ENCODE measurements at regions of chr12 and their contacts with region 1.

Region 1: DNA sequence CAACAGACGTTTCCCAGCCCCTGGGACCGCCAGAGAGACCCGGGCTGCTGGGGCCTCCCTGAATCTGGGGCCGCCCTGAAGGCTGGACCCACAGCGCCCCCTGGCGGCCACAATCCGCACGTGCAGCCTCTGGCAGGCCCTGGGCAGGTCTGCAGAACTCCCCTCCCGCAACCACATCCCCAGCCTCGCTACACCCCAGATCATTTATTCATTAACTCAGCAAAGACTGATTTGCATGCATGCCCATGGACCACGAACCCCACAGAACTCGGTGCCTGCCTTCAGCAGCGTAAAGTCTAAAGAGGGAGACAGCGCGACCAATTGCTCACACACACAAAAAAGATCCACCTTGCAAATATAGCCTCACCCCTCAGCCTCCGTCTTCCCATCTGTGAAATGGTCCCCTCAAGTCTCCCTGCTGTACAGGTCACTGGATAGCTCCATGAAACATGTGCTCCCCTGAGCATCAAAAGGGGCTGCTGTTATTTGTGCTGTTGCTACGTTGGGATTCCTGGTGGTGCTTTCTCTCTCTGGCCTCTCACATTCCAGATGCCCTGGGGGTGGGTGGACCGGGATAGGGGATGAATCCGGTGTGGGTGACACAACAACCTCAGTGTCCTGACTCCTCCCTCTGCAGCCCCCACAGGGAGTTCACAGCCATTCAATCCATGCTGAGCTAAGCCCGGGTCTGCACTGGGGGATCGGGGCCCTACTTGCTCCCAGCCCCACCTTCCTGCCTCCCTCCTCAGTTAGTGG is 96.4 kb downstream of the SCARB1 start:
- DNase-seq: peak; percentile 88 to 92 (median 89)
- H3K4me3 ChIP-seq: no peak overlapping the region
- H3K27ac ChIP-seq: no peak overlapping the region
- H3K4me1 ChIP-seq: peaks cover 2 to 16% (median 16%) of the 10 kb centered on the region in 3 donors
- H3K27me3 ChIP-seq: no peaks in the 10 kb centered on the region
- CTCF ChIP-seq: peak; percentile 98

Region 2: DNA sequence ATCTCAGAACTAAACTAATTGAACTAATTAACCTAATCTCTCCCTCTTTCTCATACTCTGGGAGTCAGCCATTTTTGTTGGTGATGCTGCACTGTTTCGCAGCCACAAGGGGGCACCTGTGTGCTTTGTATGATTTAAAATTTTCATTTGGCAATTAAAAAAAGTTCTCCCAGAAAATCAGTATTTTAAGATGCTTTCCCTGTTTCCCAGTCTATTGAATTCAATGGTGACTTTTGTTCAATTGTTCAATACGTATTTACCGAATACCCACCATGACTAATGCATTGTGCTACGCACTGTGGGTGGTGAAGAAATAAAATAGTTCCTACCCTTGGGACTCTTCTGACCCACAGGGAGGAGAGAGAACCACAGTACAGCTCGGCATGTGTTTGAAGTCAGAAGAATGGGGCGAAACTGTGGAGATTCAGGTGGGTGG is 730.6 kb before region 1 on chr12:
- intact Hi-C with region 1: loop called (anchors 5 kb)
- DNase-seq: peak in 3 of 5 donors; percentile 64 to 81 (median 71)
- H3K4me3 ChIP-seq: no peak overlapping the region
- H3K27ac ChIP-seq: no peak overlapping the region
- H3K4me1 ChIP-seq: no peaks in the 10 kb centered on the region
- H3K27me3 ChIP-seq: no peaks in the 10 kb centered on the region
- CTCF ChIP-seq: peak; percentile 96

Region 3: DNA sequence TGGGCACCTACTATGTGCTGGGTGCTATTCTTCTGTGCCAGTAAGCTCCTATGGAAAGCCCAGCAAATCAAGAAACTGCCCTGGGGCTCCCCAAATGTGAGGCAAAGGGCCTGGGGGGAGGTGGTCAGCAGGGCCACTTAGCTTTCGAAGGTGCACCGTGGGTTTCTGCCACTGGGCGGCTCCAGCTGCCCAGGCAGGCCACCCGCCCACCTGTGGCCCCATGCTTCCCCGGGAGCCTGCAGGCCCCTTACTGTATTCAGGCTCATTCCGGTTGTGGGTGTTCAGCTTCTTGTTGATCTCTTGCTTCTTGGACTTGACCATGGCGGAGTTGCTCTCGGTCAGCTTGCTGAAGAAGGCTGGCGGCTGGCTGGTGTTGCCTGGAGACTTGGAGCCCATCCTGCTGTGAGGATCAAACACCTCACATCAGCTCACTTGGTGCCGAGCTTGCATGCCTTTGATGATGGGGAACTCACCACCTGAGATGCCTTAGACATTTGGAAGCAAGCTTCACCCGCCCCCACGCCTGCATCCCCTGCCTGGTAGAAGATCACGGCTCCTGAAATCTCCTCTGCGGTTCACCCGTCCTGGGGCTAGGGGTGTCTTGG is 435.1 kb before region 1 on chr12:
- intact Hi-C with region 1: loop called (anchors 10 kb)
- DNase-seq: no peak
- H3K4me3 ChIP-seq: no peak overlapping the region
- H3K27ac ChIP-seq: no peak overlapping the region
- H3K4me1 ChIP-seq: peaks cover 0 to 4% (median 0%) of the 10 kb centered on the region in 3 donors
- H3K27me3 ChIP-seq: no peaks in the 10 kb centered on the region
- CTCF ChIP-seq: no peak

Region 4: DNA sequence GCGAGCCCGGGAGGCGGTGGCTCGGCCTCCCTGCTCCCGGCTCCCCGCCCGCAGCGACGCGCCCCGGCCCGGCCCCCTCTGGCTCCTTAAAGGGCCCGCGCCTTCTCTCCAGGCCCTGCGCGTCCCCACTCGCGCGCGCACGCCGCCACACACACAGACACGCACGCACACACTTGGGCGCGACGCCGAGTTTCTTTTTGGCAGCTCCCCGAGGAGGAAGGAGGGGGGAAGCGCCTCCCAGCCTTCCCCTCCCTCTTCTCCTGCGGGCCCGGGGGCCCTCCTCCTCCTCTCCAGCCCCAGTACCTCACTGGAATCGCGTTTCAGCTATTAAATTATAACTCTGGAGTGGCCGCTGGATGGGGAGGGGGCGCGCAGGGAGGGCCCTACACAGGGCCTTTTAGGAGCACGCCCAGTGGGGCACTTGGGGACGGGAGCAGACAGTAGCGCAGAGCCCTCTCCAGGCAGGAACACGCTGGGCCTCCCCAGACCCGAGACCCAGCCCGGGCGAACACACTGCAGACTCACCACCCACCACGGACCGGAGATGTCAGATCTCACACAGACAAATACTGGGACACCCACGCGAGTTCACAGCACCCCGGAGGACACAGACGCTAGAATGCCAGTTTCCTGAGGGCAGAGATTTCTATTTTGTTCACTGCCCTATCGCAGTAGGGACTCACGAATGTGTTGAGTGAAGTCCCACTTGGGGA is 199.4 kb before region 1 on chr12:
- intact Hi-C with region 1: loop called (anchors 10 kb)
- DNase-seq: peak; percentile 89 to 98 (median 93)
- H3K4me3 ChIP-seq: peak overlapping the region; percentile 24 to 44 (median 30)
- H3K27ac ChIP-seq: peak overlapping the region; percentile 74 to 85
- H3K4me1 ChIP-seq: peaks cover 0 to 19% (median 8%) of the 10 kb centered on the region in 3 donors
- H3K27me3 ChIP-seq: no peaks in the 10 kb centered on the region
- CTCF ChIP-seq: no peak

Region 5: GRCh38 chr12:124917135-124917840 is 150.0 kb after region 1 on chr12:
- intact Hi-C with region 1: no loop called
- DNase-seq: peak; percentile 98 to 99 (median 99)
- H3K4me3 ChIP-seq: peak overlapping the region; percentile 61 to 84 (median 70)
- H3K27ac ChIP-seq: peak overlapping the region; percentile 100
- H3K4me1 ChIP-seq: peaks cover 10 to 30% (median 20%) of the 10 kb centered on the region in 3 donors
- H3K27me3 ChIP-seq: no peaks in the 10 kb centered on the region
- CTCF ChIP-seq: no peak